ENCODE measurements at regions of chr19 and their contacts with region 1.

Region 1: DNA sequence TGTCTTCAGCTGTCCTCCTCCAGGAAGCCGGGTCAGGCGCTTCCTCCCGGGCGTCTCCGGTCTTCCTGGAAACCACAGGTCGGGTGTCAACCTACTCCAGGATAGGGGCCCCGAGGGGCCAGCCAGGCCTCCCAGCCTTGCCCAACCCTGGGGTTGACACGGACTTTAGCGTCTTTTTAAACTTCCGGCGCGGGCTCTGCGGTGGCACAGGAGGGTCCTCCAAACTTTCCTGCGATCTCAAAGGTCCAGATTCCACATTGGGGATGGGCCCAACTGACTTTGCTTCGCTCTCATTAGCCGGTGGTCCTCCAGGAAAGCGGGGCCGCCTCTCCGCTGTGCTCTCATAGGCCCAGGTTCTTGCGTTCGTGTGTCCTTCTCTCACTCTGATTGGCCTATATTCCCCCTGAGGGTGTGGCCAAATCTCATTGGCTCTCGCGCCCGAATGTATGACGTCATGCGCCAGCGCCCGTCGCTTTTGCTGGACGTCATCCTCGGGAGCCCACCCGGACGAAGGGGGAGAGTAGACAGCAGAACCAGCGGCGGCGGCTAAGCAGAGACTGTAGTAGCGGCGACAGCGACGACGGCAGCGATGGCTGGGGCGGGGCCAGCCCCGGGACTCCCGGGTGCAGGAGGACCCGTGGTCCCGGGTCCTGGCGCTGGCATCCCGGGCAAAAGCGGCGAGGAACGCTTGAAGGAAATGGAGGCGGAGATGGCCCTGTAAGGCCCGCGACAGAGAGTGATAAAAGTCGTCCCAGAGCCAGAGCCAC is at the start of gene RBM42:
- DNase-seq: peak; percentile 96
- H3K4me3 Mint-ChIP-seq: peak within 1 kb of the TSS; percentile 100
- H3K27ac Mint-ChIP-seq: peak within 1 kb of the TSS; percentile 100
- H3K4me1 Mint-ChIP-seq: peaks cover 12% of the 10 kb centered on the region
- H3K27me3 Mint-ChIP-seq: no peaks in the 10 kb centered on the region
- total RNA-seq, gene RBM42: 105 and 118 TPM in 2 replicates

Region 2: DNA sequence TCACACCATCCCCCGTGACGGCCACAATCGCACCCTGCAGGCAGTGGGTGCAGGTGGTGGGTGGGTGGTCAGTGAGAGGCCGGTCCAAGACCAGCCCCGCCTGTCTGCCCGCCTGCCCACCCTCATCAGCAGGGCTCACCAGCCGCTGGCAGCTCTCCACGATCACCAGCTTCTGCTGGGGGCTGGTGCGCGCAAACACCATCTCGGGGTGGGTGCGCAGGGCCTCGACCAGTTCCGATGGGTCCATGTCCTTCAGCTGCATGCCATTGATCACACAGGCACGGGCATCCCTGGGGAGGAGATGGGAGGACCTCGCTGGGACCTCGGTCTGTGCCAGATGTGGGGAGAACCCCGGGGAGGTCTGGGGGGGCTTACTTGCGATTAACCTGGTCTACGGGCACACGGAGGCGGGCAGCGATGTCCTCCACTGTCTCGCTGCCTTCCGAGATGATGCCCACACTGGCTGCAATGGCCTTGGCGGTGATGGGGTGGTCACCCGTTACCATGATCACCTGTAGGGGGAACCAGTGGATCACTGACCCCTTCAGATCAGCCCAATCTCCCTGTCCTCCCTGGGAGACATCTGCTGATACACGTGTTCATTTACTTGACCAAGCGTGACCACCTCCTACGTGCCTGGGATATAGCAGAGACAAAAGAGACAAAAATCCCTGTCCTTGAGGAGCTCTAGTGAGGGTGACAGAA is 73.3 kb before region 1 on chr19:
- intact Hi-C with region 1: no loop called
- DNase-seq: no peak
- H3K4me3 Mint-ChIP-seq: no peak overlapping the region
- H3K27ac Mint-ChIP-seq: peak overlapping the region; percentile 4
- H3K4me1 Mint-ChIP-seq: no peaks in the 10 kb centered on the region
- H3K27me3 Mint-ChIP-seq: peaks cover 26% of the 10 kb centered on the region

Region 3: DNA sequence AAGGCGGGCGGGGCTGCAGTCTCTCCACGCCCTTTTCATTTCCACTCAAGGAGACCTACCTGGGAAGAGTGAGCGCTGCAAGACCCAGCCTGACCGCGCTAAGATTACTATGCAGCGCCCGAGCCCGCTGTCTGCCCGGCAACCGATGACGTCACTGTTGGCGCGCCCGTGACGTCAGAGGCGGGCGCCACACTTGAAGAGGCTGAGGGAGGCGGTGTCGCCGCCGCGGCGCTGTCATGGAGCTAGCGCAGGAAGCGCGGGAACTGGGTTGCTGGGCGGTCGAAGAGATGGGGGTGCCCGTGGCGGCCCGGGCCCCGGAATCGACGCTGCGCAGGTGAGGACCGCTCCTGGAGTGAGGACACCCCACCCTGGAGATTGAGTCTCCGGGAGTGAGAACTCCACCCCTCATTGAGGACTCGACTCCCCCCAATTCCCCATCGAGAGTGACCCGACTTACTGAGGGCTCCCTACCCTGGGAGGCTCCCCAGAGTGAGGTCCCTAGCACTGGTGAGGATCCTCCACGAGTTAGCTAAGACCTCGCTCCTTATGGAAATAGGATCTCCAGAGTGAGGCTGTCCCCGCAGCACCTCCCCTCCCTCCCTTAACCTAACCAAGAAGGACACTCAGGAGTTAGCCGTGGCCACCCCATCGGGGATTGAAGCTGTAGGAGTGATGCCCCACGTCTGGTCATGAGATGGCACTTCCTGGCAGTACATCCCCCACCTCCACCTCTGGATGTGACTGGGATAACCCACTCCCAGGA is 16.0 kb before region 1 on chr19 and contains the start of gene HAUS5:
- intact Hi-C with region 1: loop called (anchors 1 kb)
- DNase-seq: peak; percentile 96
- H3K4me3 Mint-ChIP-seq: peak within 1 kb of the TSS; percentile 87
- H3K27ac Mint-ChIP-seq: peak within 1 kb of the TSS; percentile 92
- H3K4me1 Mint-ChIP-seq: peaks cover 33% of the 10 kb centered on the region
- H3K27me3 Mint-ChIP-seq: peaks cover 3% of the 10 kb centered on the region
- total RNA-seq, gene HAUS5: 41.0 and 48.4 TPM in 2 replicates

Region 4: DNA sequence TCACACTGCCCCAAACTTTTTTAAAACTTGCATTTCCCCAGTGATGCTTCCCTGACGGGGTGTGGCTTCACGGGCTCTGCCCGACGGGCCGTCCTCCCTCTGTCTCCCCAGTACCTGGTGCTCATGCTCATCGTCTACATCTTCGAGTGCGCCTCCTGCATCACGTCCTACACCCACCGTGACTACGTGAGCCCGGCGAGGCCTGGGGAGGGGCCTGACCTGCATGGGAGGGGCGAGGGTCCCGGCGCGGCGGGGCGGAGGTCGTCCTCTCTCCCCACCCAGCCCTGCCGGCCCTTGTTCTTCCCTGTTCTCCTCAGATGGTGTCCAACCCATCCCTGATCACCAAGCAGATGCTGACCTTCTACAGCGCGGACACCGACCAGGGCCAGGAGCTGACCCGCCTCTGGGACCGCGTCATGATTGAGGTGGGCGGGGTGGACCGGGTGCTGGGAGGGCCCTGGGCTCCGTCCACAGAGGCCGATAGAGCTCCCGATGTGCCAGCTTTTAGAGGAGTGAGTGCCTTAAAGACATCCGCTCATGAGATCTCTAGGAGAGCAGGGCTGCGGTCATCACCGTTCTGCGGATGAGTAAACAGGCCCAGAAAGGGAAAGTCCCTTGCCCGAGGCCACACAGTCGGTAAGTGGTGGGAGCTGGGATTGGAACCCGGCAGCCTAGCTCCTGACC is 44.5 kb after region 1 on chr19:
- intact Hi-C with region 1: loop called (anchors 1 kb)
- DNase-seq: peak; percentile 58
- H3K4me3 Mint-ChIP-seq: peak overlapping the region; percentile 81
- H3K27ac Mint-ChIP-seq: peak overlapping the region; percentile 29
- H3K4me1 Mint-ChIP-seq: peaks cover 15% of the 10 kb centered on the region
- H3K27me3 Mint-ChIP-seq: peaks cover 37% of the 10 kb centered on the region